IMR-90 (cell line): ENCODE measurements at regions of chr11 and their contacts with region 1.

Region 1: DNA sequence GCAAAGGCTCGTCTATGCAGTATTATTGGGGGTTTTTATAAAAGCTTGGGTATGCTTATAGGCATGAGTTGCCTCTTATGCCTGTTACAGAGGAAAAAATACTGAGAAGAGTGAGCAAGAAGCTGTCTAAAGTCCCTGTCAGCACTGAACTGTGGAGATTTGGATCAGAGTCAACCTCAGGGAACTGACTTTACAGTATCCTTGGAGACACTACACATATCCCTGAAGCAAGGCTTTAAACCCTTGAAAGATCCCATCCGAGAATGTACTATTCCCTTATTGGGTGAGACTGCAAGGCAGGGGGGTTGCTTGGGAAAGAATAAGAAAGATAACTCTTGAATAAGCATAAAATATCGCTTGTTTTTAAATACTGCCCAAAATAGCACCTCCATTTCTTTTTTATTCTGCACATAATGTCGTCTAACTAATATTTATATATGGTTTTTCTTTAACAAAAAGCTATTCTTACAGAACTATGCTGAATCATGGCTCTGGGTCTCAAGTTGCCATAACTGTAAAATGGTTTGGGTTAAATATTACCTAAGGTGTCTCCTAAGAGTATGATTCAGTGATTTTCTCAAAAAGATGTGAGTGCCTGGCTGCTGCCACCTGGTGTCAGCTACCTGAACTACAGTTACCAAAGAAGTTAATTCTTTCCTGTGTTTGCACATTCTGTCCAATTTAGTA is 1062.8 kb downstream of the DLG2 start:
- DNase-seq: peak; percentile 44
- ATAC-seq: peak; percentile 83; the same call in 1 of the 2 replicates
- H3K4me3 ChIP-seq: no peak overlapping the region
- H3K27ac ChIP-seq: no peak overlapping the region
- H3K4me1 ChIP-seq: no peaks in the 10 kb centered on the region
- H3K27me3 ChIP-seq: no peaks in the 10 kb centered on the region
- CTCF ChIP-seq: peak; percentile 74
- POLR2A ChIP-seq: no peak
- RAD21 ChIP-seq: peak; percentile 53

Region 2: GRCh38 chr11:82682003-82682751 is 1882.1 kb before region 1 on chr11:
- CTCF ChIA-PET with region 1: no interaction called
- POLR2A ChIA-PET with region 1: no interaction called
- dilution Hi-C with region 1: no loop called
- in situ Hi-C with region 1: no loop called
- intact Hi-C with region 1: loop called (anchors 5 kb)
- DNase-seq: peak; percentile 75
- ATAC-seq: peak; percentile 90
- H3K4me3 ChIP-seq: no peak overlapping the region
- H3K27ac ChIP-seq: no peak overlapping the region
- H3K4me1 ChIP-seq: no peaks in the 10 kb centered on the region
- H3K27me3 ChIP-seq: no peaks in the 10 kb centered on the region; the same call in 1 of the 2 replicates
- CTCF ChIP-seq: peak; percentile 70
- POLR2A ChIP-seq: no peak
- RAD21 ChIP-seq: peak; percentile 69

Region 3: DNA sequence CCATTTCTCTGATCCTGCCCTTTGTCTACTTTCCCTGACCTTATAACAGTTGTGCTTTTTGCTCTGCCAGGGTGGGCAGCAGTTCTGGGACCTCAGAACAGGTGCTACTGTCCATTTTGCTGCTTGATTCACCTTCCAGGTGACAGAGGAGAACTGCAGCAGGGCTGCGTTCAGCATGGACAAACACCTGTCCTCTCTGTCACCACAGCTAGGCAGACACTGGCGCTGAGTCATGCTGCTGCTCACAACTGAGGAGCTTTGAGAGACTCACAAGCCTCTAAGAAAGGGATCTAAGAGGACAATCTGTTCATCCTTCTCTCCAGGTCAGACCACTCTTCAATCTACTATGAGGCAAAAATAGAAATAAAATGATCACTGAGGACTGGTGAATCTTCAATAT is 133.7 kb before region 1 on chr11:
- CTCF ChIA-PET with region 1: no interaction called
- POLR2A ChIA-PET with region 1: no interaction called
- dilution Hi-C with region 1: no loop called
- in situ Hi-C with region 1: no loop called
- intact Hi-C with region 1: no loop called
- DNase-seq: no peak
- ATAC-seq: no peak
- H3K4me3 ChIP-seq: no peak overlapping the region
- H3K27ac ChIP-seq: no peak overlapping the region
- H3K4me1 ChIP-seq: no peaks in the 10 kb centered on the region
- H3K27me3 ChIP-seq: no peaks in the 10 kb centered on the region
- CTCF ChIP-seq: no peak
- POLR2A ChIP-seq: no peak
- RAD21 ChIP-seq: no peak

Region 4: DNA sequence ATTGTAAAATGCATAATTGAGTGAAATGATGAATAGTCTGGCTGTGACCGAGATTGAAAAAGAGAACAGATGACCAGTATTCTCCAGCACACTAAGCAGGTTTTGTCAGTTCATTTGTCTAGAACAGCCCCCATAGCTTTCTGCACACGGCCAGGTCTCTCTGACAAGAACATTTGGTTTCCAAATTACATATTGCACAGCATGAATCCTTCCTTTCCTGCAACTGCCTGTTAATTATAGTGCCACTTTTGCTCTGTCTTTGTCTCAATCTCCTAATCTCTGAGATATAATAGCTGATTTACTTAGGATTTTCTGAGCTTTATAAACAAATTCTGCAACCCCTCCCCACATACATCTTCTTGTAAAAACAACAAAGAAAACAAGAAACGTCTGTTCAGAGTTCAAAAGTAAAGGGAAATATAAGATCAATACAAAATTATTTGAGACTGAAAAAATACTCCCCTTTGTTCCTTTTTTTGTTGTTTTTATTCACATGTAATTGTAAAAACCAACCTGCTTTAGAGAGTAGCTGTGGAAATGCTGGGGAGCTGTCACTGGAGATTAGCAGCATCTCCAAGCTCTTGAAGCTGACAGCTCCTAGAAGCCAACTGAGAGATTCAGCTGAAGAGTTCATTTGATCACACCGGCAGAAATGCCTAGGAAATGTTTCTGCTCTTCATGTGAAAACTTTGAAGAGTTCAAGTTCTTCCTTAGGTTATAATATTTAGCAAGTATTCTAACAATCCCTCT is 64.7 kb after region 1 on chr11:
- CTCF ChIA-PET with region 1: no interaction called
- POLR2A ChIA-PET with region 1: no interaction called
- dilution Hi-C with region 1: no loop called
- in situ Hi-C with region 1: no loop called
- intact Hi-C with region 1: no loop called
- DNase-seq: no peak
- ATAC-seq: no peak
- H3K4me3 ChIP-seq: no peak overlapping the region
- H3K27ac ChIP-seq: no peak overlapping the region
- H3K4me1 ChIP-seq: no peaks in the 10 kb centered on the region
- H3K27me3 ChIP-seq: no peaks in the 10 kb centered on the region
- CTCF ChIP-seq: no peak
- POLR2A ChIP-seq: no peak
- RAD21 ChIP-seq: no peak